Endothelial cell of umbilical vein (primary cell): ENCODE measurements at regions of chr1 and their contacts with region 1.

Region 1: GRCh38 chr1:204446370-204447111 is 34.9 kb upstream of the PPP1R15B start:
- DNase-seq: peak; percentile 65
- H3K4me3 ChIP-seq: no peak overlapping the region
- H3K27ac ChIP-seq: no peak overlapping the region
- H3K4me1 ChIP-seq: peaks cover 9% of the 10 kb centered on the region
- H3K27me3 ChIP-seq: no peaks in the 10 kb centered on the region
- CTCF ChIP-seq: peak; percentile 73 to 82
- POLR2A ChIP-seq: no peak

Region 2: DNA sequence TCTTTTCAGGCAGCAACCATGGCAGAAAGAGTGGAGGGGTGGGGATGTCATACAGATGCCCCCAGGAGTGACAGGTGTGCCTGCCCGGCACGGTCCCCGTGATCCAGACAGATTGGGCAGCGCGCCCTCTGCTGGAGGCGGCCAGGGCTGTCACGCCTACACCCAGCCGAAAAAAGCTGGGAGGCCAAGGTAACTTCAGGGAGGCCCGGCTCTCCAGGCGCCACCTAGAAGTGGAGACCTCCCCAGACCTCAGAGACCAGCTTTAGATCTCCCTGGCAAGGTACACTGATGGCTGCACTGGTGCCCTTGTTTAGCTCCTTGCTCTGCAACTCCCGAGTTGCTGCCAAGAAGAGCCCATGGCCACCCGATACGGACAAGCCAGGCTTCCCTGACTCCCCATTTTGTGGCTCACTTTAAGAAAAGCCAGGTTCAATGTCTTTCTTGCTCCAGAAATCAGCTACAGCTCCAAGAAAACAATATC is 239.4 kb before region 1 on chr1:
- CTCF ChIA-PET with region 1: no interaction called
- POLR2A ChIA-PET with region 1: no interaction called
- dilution Hi-C with region 1: no loop called
- intact Hi-C with region 1: no loop called
- DNase-seq: peak; percentile 41
- H3K4me3 ChIP-seq: no peak overlapping the region
- H3K27ac ChIP-seq: no peak overlapping the region
- H3K4me1 ChIP-seq: no peaks in the 10 kb centered on the region
- H3K27me3 ChIP-seq: no peaks in the 10 kb centered on the region
- CTCF ChIP-seq: peak; percentile 89 to 97
- POLR2A ChIP-seq: no peak

Region 3: DNA sequence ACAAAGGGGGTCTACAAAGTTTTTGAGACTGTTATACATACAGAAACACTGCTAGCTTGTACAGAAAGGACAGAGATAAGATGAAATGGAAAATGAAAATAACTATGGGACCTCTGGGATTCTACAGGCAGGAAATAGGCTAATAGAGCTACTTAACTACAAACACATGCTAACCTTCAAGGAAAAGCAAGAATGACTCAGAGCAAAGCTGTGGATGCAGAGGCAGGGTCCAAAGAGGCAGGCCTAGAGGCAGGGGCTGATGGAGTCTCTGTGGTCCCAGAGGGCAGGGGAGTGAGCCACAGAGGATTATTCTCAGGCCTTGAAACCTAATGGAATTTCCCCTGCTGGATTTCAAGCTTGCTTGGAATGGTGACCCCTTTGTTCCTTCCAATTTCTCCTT is 214.0 kb before region 1 on chr1:
- CTCF ChIA-PET with region 1: no interaction called
- POLR2A ChIA-PET with region 1: no interaction called
- dilution Hi-C with region 1: no loop called
- intact Hi-C with region 1: no loop called
- DNase-seq: no peak
- H3K4me3 ChIP-seq: no peak overlapping the region
- H3K27ac ChIP-seq: no peak overlapping the region
- H3K4me1 ChIP-seq: no peaks in the 10 kb centered on the region
- H3K27me3 ChIP-seq: no peaks in the 10 kb centered on the region
- CTCF ChIP-seq: no peak
- POLR2A ChIP-seq: no peak

Region 4: GRCh38 chr1:204411451-204412204 is 34.9 kb before region 1 on chr1 and contains the start of gene PPP1R15B:
- CTCF ChIA-PET with region 1: interaction called, 12 read pairs
- POLR2A ChIA-PET with region 1: no interaction called
- dilution Hi-C with region 1: no loop called
- intact Hi-C with region 1: loop called (anchors 1 kb)
- DNase-seq: peak; percentile 99
- H3K4me3 ChIP-seq: peak within 1 kb of the TSS; percentile 49 to 94 (median 78)
- H3K27ac ChIP-seq: peak within 1 kb of the TSS; percentile 89
- H3K4me1 ChIP-seq: peaks cover 6% of the 10 kb centered on the region
- H3K27me3 ChIP-seq: no peaks in the 10 kb centered on the region
- CTCF ChIP-seq: no peak
- POLR2A ChIP-seq: peak; percentile 96
- total RNA-seq, gene PPP1R15B: 39.8 and 41.7 TPM in 2 replicates

Region 5: GRCh38 chr1:204417231-204417997 is 29.1 kb before region 1 on chr1:
- CTCF ChIA-PET with region 1: interaction called, 12 read pairs
- POLR2A ChIA-PET with region 1: no interaction called
- dilution Hi-C with region 1: no loop called
- intact Hi-C with region 1: no loop called
- DNase-seq: peak; percentile 95
- H3K4me3 ChIP-seq: peak overlapping the region in 1 of 3 experiments; percentile 31
- H3K27ac ChIP-seq: peak overlapping the region; percentile 84
- H3K4me1 ChIP-seq: peaks cover 26% of the 10 kb centered on the region
- H3K27me3 ChIP-seq: no peaks in the 10 kb centered on the region
- CTCF ChIP-seq: no peak
- POLR2A ChIP-seq: no peak

Region 6: DNA sequence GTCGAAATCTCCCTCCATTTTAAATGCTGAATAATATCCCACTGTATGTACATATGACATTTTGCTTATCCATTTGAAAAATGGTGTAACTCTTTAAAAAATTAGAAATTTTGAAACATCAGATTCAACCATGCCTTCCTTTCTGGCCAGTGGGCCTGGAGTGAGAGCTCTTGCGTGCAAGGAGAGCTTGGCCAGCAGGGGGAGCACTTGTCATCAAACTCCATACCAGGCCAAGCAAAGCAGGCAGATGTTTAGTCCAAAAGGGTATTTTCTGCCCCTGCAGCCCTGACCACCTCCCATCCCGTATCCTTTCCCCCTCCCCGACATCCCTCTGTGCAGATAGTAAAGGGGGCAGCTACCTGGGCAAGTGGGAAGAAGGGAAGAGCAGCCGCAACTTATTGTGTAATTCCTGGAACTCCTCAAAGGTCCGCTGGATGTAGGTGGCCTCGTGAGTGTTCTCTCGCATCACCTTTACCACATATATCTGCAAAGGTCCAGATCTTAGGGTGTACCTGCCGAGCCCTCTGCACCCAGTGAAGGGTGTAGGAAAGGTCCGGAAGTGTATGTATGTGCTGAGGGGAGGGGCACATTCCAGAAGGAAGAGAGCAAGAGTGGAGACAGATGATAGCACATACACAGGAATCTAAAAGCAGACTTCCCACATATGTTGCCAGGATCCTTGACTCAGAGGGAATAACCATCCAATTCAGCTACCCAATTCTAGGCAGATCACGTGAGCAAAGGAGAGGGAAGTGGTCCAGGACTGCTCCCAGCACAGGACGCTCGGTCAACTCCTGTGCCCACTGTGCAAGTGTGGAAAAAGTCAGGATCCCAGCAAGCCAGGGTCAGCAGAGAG is 15.0 kb before region 1 on chr1:
- CTCF ChIA-PET with region 1: interaction called, 53 read pairs
- POLR2A ChIA-PET with region 1: no interaction called
- dilution Hi-C with region 1: no loop called
- intact Hi-C with region 1: loop called (anchors 1 kb)
- DNase-seq: peak; percentile 75
- H3K4me3 ChIP-seq: no peak overlapping the region
- H3K27ac ChIP-seq: no peak overlapping the region
- H3K4me1 ChIP-seq: peaks cover 12% of the 10 kb centered on the region
- H3K27me3 ChIP-seq: no peaks in the 10 kb centered on the region
- CTCF ChIP-seq: peak; percentile 89 to 90
- POLR2A ChIP-seq: no peak

Region 7: GRCh38 chr1:204465546-204466415 is 19.2 kb after region 1 on chr1:
- CTCF ChIA-PET with region 1: interaction called, 94 read pairs
- POLR2A ChIA-PET with region 1: no interaction called
- dilution Hi-C with region 1: no loop called
- intact Hi-C with region 1: loop called (anchors 1 kb)
- DNase-seq: peak; percentile 44
- H3K4me3 ChIP-seq: no peak overlapping the region
- H3K27ac ChIP-seq: peak overlapping the region; percentile 2
- H3K4me1 ChIP-seq: peaks cover 66% of the 10 kb centered on the region
- H3K27me3 ChIP-seq: no peaks in the 10 kb centered on the region
- CTCF ChIP-seq: no peak
- POLR2A ChIP-seq: no peak

Region 8: DNA sequence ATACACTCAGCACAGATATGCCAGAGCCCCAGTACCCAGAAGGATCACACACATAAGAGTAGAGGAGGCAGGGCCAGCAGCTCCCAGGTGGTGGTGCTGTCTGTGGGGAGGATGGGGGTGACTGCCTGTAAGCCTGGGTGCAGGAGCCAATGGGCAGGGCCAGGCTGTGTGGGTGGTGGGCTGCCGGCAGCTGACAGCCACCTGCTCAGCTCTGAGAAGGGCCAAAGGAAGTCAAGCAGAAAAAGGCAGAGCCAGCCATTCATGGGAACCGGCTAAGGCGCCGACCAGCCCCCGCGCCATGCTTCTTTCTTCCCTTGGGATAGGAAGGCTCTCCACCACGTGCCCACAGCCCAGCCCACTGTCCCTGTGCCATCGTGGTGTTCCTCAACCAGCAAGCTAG is 34.0 kb after region 1 on chr1:
- CTCF ChIA-PET with region 1: interaction called, 129 read pairs
- POLR2A ChIA-PET with region 1: no interaction called
- dilution Hi-C with region 1: no loop called
- intact Hi-C with region 1: loop called (anchors 2 kb)
- DNase-seq: no peak
- H3K4me3 ChIP-seq: no peak overlapping the region
- H3K27ac ChIP-seq: no peak overlapping the region
- H3K4me1 ChIP-seq: peaks cover 27% of the 10 kb centered on the region
- H3K27me3 ChIP-seq: no peaks in the 10 kb centered on the region
- CTCF ChIP-seq: no peak
- POLR2A ChIP-seq: no peak

Region 9: DNA sequence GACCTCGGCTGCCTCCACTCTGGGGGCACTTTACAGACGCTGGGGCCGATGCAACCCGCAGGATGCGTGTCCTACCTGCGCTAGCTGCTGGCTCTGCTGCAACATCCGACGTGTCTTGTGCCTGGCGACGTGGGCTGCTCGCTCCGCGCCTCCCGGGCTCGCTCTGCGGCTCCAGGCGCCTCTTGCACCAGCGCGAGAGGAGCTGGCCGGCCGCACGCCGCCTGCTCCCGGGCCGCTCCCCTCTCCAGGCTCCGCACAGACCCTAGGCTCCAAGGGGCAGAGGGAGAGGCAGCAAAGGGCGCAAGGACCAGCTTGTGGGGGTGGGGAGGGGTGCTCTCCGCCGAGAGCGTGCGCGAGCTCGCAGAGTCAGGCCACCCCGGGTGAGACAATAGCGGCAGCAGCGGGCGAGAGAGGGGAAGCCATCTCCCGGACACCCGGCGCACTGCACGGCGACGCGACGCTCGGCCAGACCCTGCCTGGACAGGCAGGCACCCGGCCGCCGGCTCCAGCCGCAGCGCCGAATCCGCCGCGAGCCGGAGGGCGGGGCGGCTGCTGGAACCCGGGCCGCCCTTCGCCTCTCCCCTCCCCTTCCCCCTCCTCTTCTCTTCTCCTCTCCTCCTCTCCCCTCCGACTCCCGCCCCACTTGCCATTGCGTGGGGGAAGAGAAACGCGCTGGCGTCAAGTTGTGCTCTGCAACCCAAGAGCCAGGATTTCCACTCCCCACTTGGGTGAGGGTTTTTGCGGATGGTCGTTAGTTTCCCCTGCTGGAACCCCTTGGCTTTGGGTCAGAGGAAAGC is 47.9 kb after region 1 on chr1 and contains the start of gene PIK3C2B:
- CTCF ChIA-PET with region 1: interaction called, 1,267 read pairs
- POLR2A ChIA-PET with region 1: interaction called, 19 read pairs
- dilution Hi-C with region 1: no loop called
- intact Hi-C with region 1: loop called (anchors 1 kb)
- DNase-seq: peak; percentile 88
- H3K4me3 ChIP-seq: peak within 1 kb of the TSS; percentile 56 to 85 (median 64)
- H3K27ac ChIP-seq: peak within 1 kb of the TSS; percentile 63
- H3K4me1 ChIP-seq: peaks cover 18% of the 10 kb centered on the region
- H3K27me3 ChIP-seq: no peaks in the 10 kb centered on the region
- CTCF ChIP-seq: peak; percentile 49 to 64
- POLR2A ChIP-seq: peak; percentile 82
- total RNA-seq, gene PIK3C2B: 41.8 and 49.0 TPM in 2 replicates